ENCODE measurements at regions of chr1 and their contacts with region 1.

Region 1: DNA sequence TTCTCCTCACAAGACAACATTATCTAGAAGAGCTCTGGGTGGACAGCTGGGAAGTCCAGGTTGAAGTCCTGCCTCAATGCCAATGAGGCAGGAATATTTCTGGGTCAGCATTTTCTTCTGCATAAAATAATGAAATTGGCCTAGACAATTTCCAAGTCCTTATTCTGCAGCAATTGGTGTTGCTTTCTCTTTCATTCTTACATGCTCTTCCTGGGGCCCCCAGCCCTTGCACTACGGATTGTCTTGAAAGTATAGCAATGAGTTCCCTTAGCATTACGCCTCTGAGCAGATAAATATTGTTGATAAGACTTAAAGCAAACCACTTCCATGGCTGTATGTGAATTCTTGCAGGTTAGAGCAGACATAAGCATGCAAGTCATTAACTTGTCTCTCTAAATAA is 188.5 kb downstream of the TGFBR3 start:
- DNase-seq: no peak
- ATAC-seq: no peak
- H3K4me3 ChIP-seq: no peak overlapping the region
- H3K27ac ChIP-seq: peak overlapping the region in 7 of 10 donors; percentile 9 to 68 (median 44)
- H3K4me1 ChIP-seq: peaks cover 0 to 76% (median 65%) of the 10 kb centered on the region in 9 donors
- H3K27me3 ChIP-seq: no peaks in the 10 kb centered on the region
- CTCF ChIP-seq: no peak

Region 2: DNA sequence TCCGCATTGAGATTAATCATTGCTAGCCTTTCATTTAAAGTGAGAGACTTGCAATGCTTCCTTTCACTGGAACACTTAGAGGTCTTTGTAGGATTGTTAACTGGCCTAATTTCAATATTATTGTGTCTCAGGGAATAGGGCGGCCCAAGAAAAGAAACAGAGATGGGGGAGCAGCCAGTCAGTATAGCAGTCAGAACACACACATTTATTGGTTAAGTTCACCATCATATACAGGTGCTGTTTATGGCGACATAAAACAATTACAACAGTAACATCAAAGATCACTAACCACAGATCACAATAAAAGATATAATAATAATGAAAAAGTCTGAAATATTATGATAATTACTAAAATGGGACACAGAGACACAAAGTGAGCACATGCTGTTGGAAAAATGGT is 1009.7 kb before region 1 on chr1:
- intact Hi-C with region 1: no loop called
- DNase-seq: no peak
- ATAC-seq: no peak
- H3K4me3 ChIP-seq: no peak overlapping the region
- H3K27ac ChIP-seq: no peak overlapping the region
- H3K4me1 ChIP-seq: no peaks in the 10 kb centered on the region
- H3K27me3 ChIP-seq: peaks cover 0 to 44% (median 26%) of the 10 kb centered on the region in 7 donors
- CTCF ChIP-seq: no peak

Region 3: GRCh38 chr1:91529856-91530255 is 167.6 kb before region 1 on chr1:
- intact Hi-C with region 1: loop called in 2 of 10 experiments (anchors 10 kb)
- DNase-seq: no peak
- ATAC-seq: peak in 1 of 8 donors; percentile 50
- H3K4me3 ChIP-seq: no peak overlapping the region
- H3K27ac ChIP-seq: no peak overlapping the region
- H3K4me1 ChIP-seq: peaks cover 0 to 5% (median 0%) of the 10 kb centered on the region in 9 donors
- H3K27me3 ChIP-seq: no peaks in the 10 kb centered on the region
- CTCF ChIP-seq: peak in 7 of 9 donors; percentile 19 to 58 (median 32)

Region 4: GRCh38 chr1:91582431-91582921 is 114.9 kb before region 1 on chr1:
- intact Hi-C with region 1: loop called in 2 of 10 experiments (anchors 10 kb)
- DNase-seq: no peak
- ATAC-seq: peak in 2 of 8 donors; percentile 40 to 65
- H3K4me3 ChIP-seq: no peak overlapping the region
- H3K27ac ChIP-seq: peak overlapping the region in 3 of 10 donors; percentile 12 to 51 (median 45)
- H3K4me1 ChIP-seq: peaks cover 0 to 50% (median 22%) of the 10 kb centered on the region in 9 donors
- H3K27me3 ChIP-seq: no peaks in the 10 kb centered on the region
- CTCF ChIP-seq: no peak

Measured in heart right ventricle (tissue), 16 donors.